ENCODE measurements at regions of chr20 and their contacts with region 1.

Region 1: GRCh38 chr20:52242237-52243230 is 51.0 kb upstream of the ZFP64 start:
- DNase-seq: peak in 6 of 9 donors; percentile 26 to 59 (median 45)
- ATAC-seq: peak; percentile 34
- H3K4me3 ChIP-seq: no peak overlapping the region
- H3K4me3 Mint-ChIP-seq: no peak overlapping the region
- H3K27ac ChIP-seq: no peak overlapping the region
- H3K27ac Mint-ChIP-seq: peak overlapping the region in 1 of 9 donors; percentile 22
- H3K4me1 ChIP-seq: no peaks in the 10 kb centered on the region
- H3K4me1 Mint-ChIP-seq: peaks cover 0 to 11% (median 2%) of the 10 kb centered on the region in 7 donors
- H3K27me3 ChIP-seq: no peaks in the 10 kb centered on the region
- H3K27me3 Mint-ChIP-seq: peaks cover 0 to 11% (median 2%) of the 10 kb centered on the region in 5 donors

Region 2: DNA sequence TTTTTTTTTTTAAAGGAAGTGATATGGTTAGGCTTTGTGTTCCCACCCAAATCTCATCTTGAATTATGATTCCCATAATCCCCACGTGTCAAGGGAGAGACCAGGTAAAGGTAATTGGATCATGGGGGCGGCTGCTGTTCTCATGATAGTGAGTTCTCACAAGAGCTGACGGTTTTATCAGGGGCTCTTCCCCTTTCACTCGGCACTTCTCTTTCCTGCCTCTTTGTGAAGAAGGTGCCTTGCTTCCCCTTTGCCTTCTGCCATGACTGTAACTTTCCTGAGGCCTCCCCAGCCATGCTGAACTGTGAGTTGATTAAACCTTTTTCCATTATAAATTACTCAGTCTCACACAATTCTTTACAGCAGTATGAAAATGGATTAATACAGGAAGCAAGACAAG is 115.2 kb before region 1 on chr20:
- CTCF ChIA-PET with region 1: no interaction called
- POLR2A ChIA-PET with region 1: no interaction called
- intact Hi-C with region 1: loop called in 1 of 2 experiments (anchors 2 kb)
- DNase-seq: no peak
- ATAC-seq: no peak
- H3K4me3 ChIP-seq: no peak overlapping the region
- H3K4me3 Mint-ChIP-seq: no peak overlapping the region
- H3K27ac ChIP-seq: no peak overlapping the region
- H3K27ac Mint-ChIP-seq: peak overlapping the region in 1 of 9 donors; percentile 3
- H3K4me1 ChIP-seq: no peaks in the 10 kb centered on the region
- H3K4me1 Mint-ChIP-seq: peaks cover 0 to 8% (median 2%) of the 10 kb centered on the region in 7 donors
- H3K27me3 ChIP-seq: no peaks in the 10 kb centered on the region
- H3K27me3 Mint-ChIP-seq: peaks cover 0 to 3% (median 0%) of the 10 kb centered on the region in 5 donors

Region 3: GRCh38 chr20:52959125-52959524 is 716.6 kb after region 1 on chr20:
- CTCF ChIA-PET with region 1: no interaction called
- POLR2A ChIA-PET with region 1: no interaction called
- intact Hi-C with region 1: loop called in 1 of 2 experiments (anchors 2 kb)
- DNase-seq: no peak
- ATAC-seq: no peak
- H3K4me3 ChIP-seq: no peak overlapping the region
- H3K4me3 Mint-ChIP-seq: no peak overlapping the region
- H3K27ac ChIP-seq: no peak overlapping the region
- H3K27ac Mint-ChIP-seq: peak overlapping the region in 2 of 9 donors; percentile 56 to 73
- H3K4me1 ChIP-seq: no peaks in the 10 kb centered on the region
- H3K4me1 Mint-ChIP-seq: peaks cover 0 to 12% (median 8%) of the 10 kb centered on the region in 7 donors
- H3K27me3 ChIP-seq: no peaks in the 10 kb centered on the region
- H3K27me3 Mint-ChIP-seq: peaks cover 0 to 12% (median under 1%) of the 10 kb centered on the region in 5 donors

Region 4: DNA sequence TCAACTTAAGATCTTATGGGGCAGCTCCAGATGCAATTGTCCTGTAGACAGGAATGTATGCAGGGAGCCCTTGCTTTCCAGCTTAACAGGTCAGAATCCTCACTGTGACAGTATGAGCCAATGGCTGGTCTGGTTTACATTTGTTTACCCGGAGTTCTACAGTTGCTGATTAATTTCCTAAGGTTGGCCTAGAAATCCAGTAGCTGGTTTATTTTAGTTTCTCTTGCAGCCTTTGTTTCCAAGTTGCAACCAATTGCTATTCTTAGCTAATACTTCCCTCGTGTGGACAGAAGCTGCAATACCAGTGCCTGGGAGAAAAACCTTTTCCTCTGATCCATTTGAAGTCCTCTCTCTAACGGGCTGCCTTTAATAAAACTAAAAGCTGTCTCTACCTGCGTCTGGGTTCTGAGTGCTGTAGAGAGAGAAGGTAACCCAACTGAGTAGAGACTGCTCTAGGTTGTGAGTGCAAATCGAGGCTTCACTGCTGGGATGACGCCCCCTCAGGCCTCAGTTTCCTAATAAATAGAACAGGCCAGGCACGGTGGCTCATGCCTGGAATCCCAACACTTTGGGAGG is 1305.2 kb after region 1 on chr20:
- CTCF ChIA-PET with region 1: interaction called, 30 read pairs
- POLR2A ChIA-PET with region 1: no interaction called
- intact Hi-C with region 1: loop called (anchors 1 kb)
- DNase-seq: peak in 8 of 9 donors; percentile 27 to 61 (median 50)
- ATAC-seq: peak; percentile 54
- H3K4me3 ChIP-seq: no peak overlapping the region
- H3K4me3 Mint-ChIP-seq: no peak overlapping the region
- H3K27ac ChIP-seq: no peak overlapping the region
- H3K27ac Mint-ChIP-seq: no peak overlapping the region
- H3K4me1 ChIP-seq: no peaks in the 10 kb centered on the region
- H3K4me1 Mint-ChIP-seq: peaks cover 0 to 6% (median 5%) of the 10 kb centered on the region in 7 donors
- H3K27me3 ChIP-seq: no peaks in the 10 kb centered on the region
- H3K27me3 Mint-ChIP-seq: no peaks in the 10 kb centered on the region

Region 5: DNA sequence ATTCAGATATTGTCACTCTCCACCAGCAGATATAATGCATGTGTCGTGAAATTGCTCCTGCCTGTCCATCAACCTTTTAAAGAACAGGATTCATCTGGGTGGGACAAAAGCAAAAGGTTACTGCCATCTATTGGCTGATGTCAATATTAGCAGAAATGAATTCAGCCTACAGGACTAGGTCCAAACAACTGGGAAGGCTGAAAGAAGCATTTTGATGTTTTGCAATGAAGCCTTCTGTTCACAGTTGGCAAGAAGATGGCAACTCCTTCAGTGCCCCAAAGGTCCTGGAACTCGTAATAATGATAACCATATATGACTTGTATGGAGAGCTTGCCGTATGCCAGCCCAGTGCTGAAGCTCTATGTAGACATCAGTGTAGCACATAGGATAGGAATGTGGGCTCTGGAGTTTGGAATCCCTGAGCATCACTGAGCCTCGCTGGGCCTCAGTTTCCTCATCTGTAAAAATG is 1820.3 kb after region 1 on chr20:
- CTCF ChIA-PET with region 1: no interaction called
- POLR2A ChIA-PET with region 1: interaction called, 3 read pairs
- intact Hi-C with region 1: loop called in 1 of 2 experiments (anchors 2 kb)
- DNase-seq: peak in 6 of 9 donors; percentile 8 to 40 (median 26)
- ATAC-seq: peak; percentile 61
- H3K4me3 ChIP-seq: no peak overlapping the region
- H3K4me3 Mint-ChIP-seq: no peak overlapping the region
- H3K27ac ChIP-seq: no peak overlapping the region
- H3K27ac Mint-ChIP-seq: no peak overlapping the region
- H3K4me1 ChIP-seq: peaks cover 0 to 9% of the 10 kb centered on the region in 2 donors
- H3K4me1 Mint-ChIP-seq: peaks cover 0 to 11% (median 7%) of the 10 kb centered on the region in 7 donors
- H3K27me3 ChIP-seq: no peaks in the 10 kb centered on the region
- H3K27me3 Mint-ChIP-seq: no peaks in the 10 kb centered on the region